ENCODE measurements at regions of chr6 and their contacts with region 1.

Region 1: GRCh38 chr6:38660313-38660712 is 20.6 kb upstream of the BTBD9 start:
- DNase-seq: no peak
- ATAC-seq: no peak
- H3K4me3 ChIP-seq: no peak overlapping the region
- H3K27ac ChIP-seq: no peak overlapping the region
- H3K4me1 ChIP-seq: no peaks in the 10 kb centered on the region
- H3K27me3 ChIP-seq: no peaks in the 10 kb centered on the region
- CTCF ChIP-seq: no peak

Region 2: GRCh38 chr6:38034274-38034914 is 625.9 kb before region 1 on chr6:
- intact Hi-C with region 1: loop called in 1 of 10 experiments (anchors 10 kb)
- DNase-seq: no peak
- ATAC-seq: no peak
- H3K4me3 ChIP-seq: no peak overlapping the region
- H3K27ac ChIP-seq: no peak overlapping the region
- H3K4me1 ChIP-seq: peaks cover 0 to 47% (median 23%) of the 10 kb centered on the region in 9 donors
- H3K27me3 ChIP-seq: no peaks in the 10 kb centered on the region
- CTCF ChIP-seq: peak in 8 of 9 donors; percentile 13 to 70 (median 56)

Region 3: DNA sequence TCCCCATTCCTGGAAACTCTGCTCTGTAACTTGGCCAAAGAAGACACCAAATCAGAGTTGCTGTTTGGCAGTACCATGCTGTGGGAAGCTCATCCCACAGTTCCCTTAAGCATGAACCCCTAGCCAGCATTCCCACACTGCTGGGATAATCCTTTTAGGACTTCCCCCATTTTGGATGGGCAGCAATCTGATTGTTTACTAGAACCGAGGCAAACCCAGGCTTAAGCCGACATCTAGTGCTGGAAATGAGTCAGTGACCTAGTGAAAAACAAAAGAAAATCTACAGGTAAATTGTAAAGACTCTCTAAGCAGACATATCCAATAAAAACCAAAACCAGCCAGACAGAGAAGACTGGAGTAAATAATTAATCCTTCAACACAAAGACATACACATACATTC is 60.0 kb after region 1 on chr6:
- intact Hi-C with region 1: no loop called
- DNase-seq: no peak
- ATAC-seq: no peak
- H3K4me3 ChIP-seq: no peak overlapping the region
- H3K27ac ChIP-seq: no peak overlapping the region
- H3K4me1 ChIP-seq: peaks cover 0 to 2% (median 1%) of the 10 kb centered on the region in 9 donors
- H3K27me3 ChIP-seq: peaks cover 0 to 47% (median 38%) of the 10 kb centered on the region in 7 donors
- CTCF ChIP-seq: no peak